Endothelial cell of umbilical vein (primary cell): ENCODE measurements at regions of chr14 and their contacts with region 1.

Region 1: GRCh38 chr14:76947078-76947837 is 81.2 kb downstream of the IRF2BPL start:
- DNase-seq: peak; percentile 83
- H3K4me3 ChIP-seq: no peak overlapping the region
- H3K27ac ChIP-seq: peak overlapping the region; percentile 72
- H3K4me1 ChIP-seq: peaks cover 40% of the 10 kb centered on the region
- H3K27me3 ChIP-seq: no peaks in the 10 kb centered on the region
- CTCF ChIP-seq: peak; percentile 28 to 54
- POLR2A ChIP-seq: no peak

Region 2: GRCh38 chr14:76929927-76930326 is 17.3 kb before region 1 on chr14:
- CTCF ChIA-PET with region 1: interaction called, 4 read pairs
- POLR2A ChIA-PET with region 1: interaction called, 11 read pairs
- dilution Hi-C with region 1: no loop called
- intact Hi-C with region 1: no loop called
- DNase-seq: no peak
- H3K4me3 ChIP-seq: no peak overlapping the region
- H3K27ac ChIP-seq: no peak overlapping the region
- H3K4me1 ChIP-seq: no peaks in the 10 kb centered on the region
- H3K27me3 ChIP-seq: no peaks in the 10 kb centered on the region
- CTCF ChIP-seq: no peak
- POLR2A ChIP-seq: no peak

Region 3: DNA sequence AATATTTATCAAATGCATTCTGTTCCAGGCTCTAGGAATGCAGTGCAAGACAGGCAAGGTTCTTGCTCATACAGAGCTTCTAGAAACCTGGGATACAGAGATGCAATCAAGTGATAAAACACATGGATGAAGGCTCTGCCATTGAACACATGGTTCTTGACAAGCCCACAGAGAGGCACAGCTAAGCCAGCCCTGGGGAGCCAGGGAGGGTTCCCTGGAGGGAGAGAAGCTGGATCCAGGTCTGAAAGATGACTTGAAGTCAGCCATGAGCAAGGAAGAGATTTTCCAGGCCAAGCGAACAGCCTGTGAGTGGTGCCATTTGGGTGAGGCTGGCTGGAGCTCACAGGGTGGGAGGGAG is 15.0 kb after region 1 on chr14:
- CTCF ChIA-PET with region 1: interaction called, 17 read pairs
- POLR2A ChIA-PET with region 1: interaction called, 4 read pairs
- dilution Hi-C with region 1: no loop called
- intact Hi-C with region 1: no loop called
- DNase-seq: no peak
- H3K4me3 ChIP-seq: peak overlapping the region in 1 of 3 experiments; percentile 43
- H3K27ac ChIP-seq: peak overlapping the region; percentile 76
- H3K4me1 ChIP-seq: peaks cover 43% of the 10 kb centered on the region
- H3K27me3 ChIP-seq: no peaks in the 10 kb centered on the region
- CTCF ChIP-seq: no peak
- POLR2A ChIP-seq: no peak

Region 4: GRCh38 chr14:76977793-76978720 is 30.8 kb after region 1 on chr14:
- CTCF ChIA-PET with region 1: no interaction called
- POLR2A ChIA-PET with region 1: no interaction called
- dilution Hi-C with region 1: no loop called
- intact Hi-C with region 1: no loop called
- DNase-seq: no peak
- H3K4me3 ChIP-seq: no peak overlapping the region
- H3K27ac ChIP-seq: no peak overlapping the region
- H3K4me1 ChIP-seq: no peaks in the 10 kb centered on the region
- H3K27me3 ChIP-seq: no peaks in the 10 kb centered on the region
- CTCF ChIP-seq: no peak
- POLR2A ChIP-seq: no peak

Region 5: DNA sequence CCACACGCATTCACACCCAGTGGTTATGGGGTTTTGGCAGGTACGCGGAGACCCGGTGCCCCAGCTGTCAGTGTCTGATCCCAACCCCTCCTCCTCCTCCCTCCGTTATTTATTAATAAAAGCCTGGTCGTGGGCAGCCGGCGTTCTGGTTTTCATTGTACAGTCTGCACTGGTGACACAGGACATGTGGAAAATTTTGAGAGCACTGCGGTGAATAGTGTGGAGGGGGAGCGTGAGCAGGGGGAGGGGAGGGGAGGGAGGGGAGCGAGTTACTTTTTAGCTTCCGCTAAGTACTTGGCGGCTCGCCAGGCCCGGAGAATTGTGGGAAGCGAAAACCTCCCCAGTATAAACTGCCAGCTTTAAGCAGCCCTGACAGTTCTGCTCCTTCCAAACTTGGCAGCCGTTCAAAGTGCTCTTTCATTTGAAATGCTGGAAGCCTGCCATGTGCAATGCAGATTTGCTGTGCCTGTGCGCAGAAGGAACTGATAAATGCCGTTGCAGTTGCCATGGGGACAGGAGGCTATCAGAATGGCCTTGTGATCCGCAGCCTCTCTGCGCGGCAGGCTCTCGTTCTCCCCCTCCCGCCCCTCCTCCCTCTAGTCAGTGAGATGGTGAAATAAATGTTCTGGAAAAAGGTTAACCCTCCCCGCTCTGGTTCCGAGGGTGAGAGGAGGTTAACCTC is 92.9 kb after region 1 on chr14:
- CTCF ChIA-PET with region 1: interaction called, 9 read pairs
- POLR2A ChIA-PET with region 1: no interaction called
- dilution Hi-C with region 1: no loop called
- intact Hi-C with region 1: loop called (anchors 1 kb)
- DNase-seq: peak; percentile 99
- H3K4me3 ChIP-seq: peak overlapping the region in 1 of 3 experiments; percentile 29
- H3K27ac ChIP-seq: peak overlapping the region; percentile 93
- H3K4me1 ChIP-seq: peaks cover 68% of the 10 kb centered on the region
- H3K27me3 ChIP-seq: no peaks in the 10 kb centered on the region
- CTCF ChIP-seq: no peak
- POLR2A ChIP-seq: no peak